ENCODE measurements at regions of chr9 and their contacts with region 1.

Region 1: GRCh38 chr9:78592811-78593210 is 295.9 kb downstream of the PSAT1 start:
- DNase-seq: no peak
- H3K4me3 ChIP-seq: no peak overlapping the region
- H3K27ac ChIP-seq: no peak overlapping the region
- H3K27me3 ChIP-seq: no peaks in the 10 kb centered on the region
- CTCF ChIP-seq: no peak

Region 2: GRCh38 chr9:78486661-78487060 is 106.2 kb before region 1 on chr9:
- CTCF ChIA-PET with region 1: no interaction called
- POLR2A ChIA-PET with region 1: no interaction called
- DNase-seq: no peak
- H3K4me3 ChIP-seq: no peak overlapping the region
- H3K27ac ChIP-seq: no peak overlapping the region
- H3K27me3 ChIP-seq: no peaks in the 10 kb centered on the region
- CTCF ChIP-seq: no peak

Region 3: GRCh38 chr9:78559449-78559885 is 33.3 kb before region 1 on chr9:
- CTCF ChIA-PET with region 1: interaction called, 11 read pairs
- POLR2A ChIA-PET with region 1: no interaction called
- DNase-seq: peak; percentile 16
- H3K4me3 ChIP-seq: no peak overlapping the region
- H3K27ac ChIP-seq: no peak overlapping the region
- H3K27me3 ChIP-seq: no peaks in the 10 kb centered on the region
- CTCF ChIP-seq: no peak

Measured in AG04450 (cell line).